BJ (cell line): ENCODE measurements at regions of chr15 and their contacts with region 1.

Region 1: DNA sequence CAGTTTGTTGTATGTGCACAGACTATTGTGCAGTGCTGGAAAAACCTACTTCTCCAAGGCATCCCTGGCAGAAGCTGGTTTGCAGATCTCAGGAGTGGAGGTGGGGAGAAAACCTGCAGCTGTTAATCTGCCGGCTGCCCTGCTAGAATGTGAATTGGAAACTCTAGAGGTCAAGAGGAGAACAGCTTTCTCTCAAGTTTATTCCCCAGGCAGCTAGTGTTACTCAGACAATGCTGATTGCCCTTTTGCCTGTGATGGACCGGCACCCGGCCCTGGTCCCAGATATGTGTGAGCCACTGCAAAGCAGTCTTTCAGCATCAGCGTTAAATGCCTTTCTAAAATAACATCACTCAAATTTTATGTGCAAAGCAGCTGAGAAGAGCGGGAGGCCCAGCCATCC is 129.7 kb upstream of the TPM1 start:
- DNase-seq: no peak
- H3K4me3 ChIP-seq: no peak overlapping the region
- H3K27me3 ChIP-seq: no peaks in the 10 kb centered on the region
- CTCF ChIP-seq: no peak

Region 2: GRCh38 chr15:62928242-62928995 is 15.6 kb after region 1 on chr15:
- CTCF ChIA-PET with region 1: interaction called, 10 read pairs
- POLR2A ChIA-PET with region 1: no interaction called
- DNase-seq: peak; percentile 85
- H3K4me3 ChIP-seq: no peak overlapping the region
- H3K27me3 ChIP-seq: no peaks in the 10 kb centered on the region
- CTCF ChIP-seq: peak; percentile 42; the same call in 1 of the 2 replicates